Endothelial cell of umbilical vein (primary cell): ENCODE measurements at regions of chr3 and their contacts with region 1.

Region 1: GRCh38 chr3:64030741-64031140 is 7.4 kb upstream of the PSMD6 start:
- DNase-seq: peak; percentile 66
- H3K4me3 ChIP-seq: peak overlapping the region in 1 of 3 experiments; percentile 4
- H3K27ac ChIP-seq: no peak overlapping the region
- H3K4me1 ChIP-seq: no peaks in the 10 kb centered on the region
- H3K27me3 ChIP-seq: peaks cover 19 to 45% of the 10 kb centered on the region in 2 experiments
- CTCF ChIP-seq: peak; percentile 77 to 82
- POLR2A ChIP-seq: no peak

Region 2: DNA sequence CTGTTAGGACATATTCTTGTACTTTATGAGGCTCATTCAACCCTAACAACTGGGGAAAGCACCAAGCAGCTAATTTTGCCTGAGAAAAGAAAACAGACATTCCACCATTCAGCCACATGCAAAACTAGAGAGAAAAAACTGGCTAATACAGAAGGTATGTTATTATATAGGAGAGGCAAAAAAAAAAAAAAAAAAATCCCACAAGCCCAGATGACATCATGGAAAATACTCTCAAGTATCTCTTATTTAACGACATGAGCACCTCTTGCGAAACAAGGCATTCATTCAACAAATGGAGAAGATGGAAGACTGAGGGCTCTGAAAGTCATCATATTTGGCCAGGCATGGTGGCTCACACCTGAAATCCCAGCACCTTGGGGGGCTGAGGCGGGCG is 133.0 kb after region 1 on chr3:
- CTCF ChIA-PET with region 1: interaction called, 4 read pairs
- POLR2A ChIA-PET with region 1: no interaction called
- dilution Hi-C with region 1: no loop called
- intact Hi-C with region 1: loop called (anchors 1 kb)
- DNase-seq: no peak
- H3K4me3 ChIP-seq: no peak overlapping the region
- H3K27ac ChIP-seq: no peak overlapping the region
- H3K4me1 ChIP-seq: no peaks in the 10 kb centered on the region
- H3K27me3 ChIP-seq: no peaks in the 10 kb centered on the region
- CTCF ChIP-seq: no peak
- POLR2A ChIP-seq: no peak

Region 3: GRCh38 chr3:64382153-64382552 is 351.4 kb after region 1 on chr3:
- CTCF ChIA-PET with region 1: interaction called, 11 read pairs
- POLR2A ChIA-PET with region 1: no interaction called
- dilution Hi-C with region 1: no loop called
- intact Hi-C with region 1: no loop called
- DNase-seq: peak; percentile 11
- H3K4me3 ChIP-seq: no peak overlapping the region
- H3K27ac ChIP-seq: no peak overlapping the region
- H3K4me1 ChIP-seq: no peaks in the 10 kb centered on the region
- H3K27me3 ChIP-seq: no peaks in the 10 kb centered on the region
- CTCF ChIP-seq: no peak
- POLR2A ChIP-seq: no peak

Region 4: DNA sequence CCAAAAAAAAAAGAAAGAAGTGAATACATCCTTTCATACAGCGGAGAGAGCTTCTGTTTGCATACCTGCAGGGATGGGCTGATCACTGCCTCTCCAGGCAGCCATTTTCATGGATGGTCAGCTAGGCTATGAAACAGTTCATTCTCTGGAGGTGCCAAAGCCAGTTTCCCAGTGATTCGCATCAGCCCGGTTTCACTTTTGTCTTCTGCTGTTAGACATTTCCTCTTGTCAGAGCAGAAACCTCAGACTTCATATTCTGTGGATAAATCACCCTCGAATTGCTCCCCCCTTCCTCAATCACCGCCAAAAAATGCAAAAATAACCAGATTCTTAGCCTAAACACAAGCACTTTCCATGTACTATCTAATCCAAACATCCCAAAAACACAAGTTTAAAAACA is 431.5 kb after region 1 on chr3:
- CTCF ChIA-PET with region 1: interaction called, 27 read pairs
- POLR2A ChIA-PET with region 1: no interaction called
- dilution Hi-C with region 1: loop called (anchors 25 kb)
- intact Hi-C with region 1: loop called (anchors 1 kb)
- DNase-seq: no peak
- H3K4me3 ChIP-seq: no peak overlapping the region
- H3K27ac ChIP-seq: no peak overlapping the region
- H3K4me1 ChIP-seq: peaks cover 3% of the 10 kb centered on the region
- H3K27me3 ChIP-seq: peaks cover 7 to 9% of the 10 kb centered on the region in 2 experiments
- CTCF ChIP-seq: no peak
- POLR2A ChIP-seq: no peak

Region 5: DNA sequence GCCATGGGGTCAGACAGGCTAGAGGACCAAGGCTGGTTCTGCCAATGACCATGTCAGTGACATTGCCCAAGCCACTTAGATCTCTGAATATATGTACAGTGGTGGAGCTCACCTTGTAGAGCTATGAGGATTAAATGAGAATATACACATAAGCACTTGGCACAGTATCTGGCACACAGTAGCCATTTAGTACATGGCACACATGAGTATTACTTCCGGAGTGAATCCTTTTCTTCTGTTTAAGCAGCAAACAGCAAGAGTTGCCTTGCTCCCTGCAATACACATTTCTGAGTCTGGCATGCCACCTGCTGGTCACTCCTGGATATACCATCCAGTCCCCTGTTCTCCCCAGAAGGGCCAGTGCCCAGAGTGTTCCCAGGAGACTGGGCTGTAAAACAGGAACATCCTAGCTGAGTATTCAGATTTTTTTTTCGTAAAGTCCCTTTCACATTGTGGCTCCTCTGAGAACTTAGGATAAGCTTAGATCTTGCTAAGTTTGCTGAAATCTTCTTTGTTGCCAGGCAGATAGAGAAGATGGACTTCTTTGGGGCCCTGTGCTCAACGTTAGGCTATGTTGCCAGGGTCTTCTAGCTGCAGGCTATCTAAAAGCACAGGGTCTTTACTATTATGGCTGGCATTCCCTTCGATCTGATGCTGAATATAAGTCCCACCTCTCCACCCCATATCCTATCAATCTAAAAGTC is 453.7 kb after region 1 on chr3:
- CTCF ChIA-PET with region 1: interaction called, 62 read pairs
- POLR2A ChIA-PET with region 1: no interaction called
- dilution Hi-C with region 1: no loop called
- intact Hi-C with region 1: loop called (anchors 1 kb)
- DNase-seq: peak; percentile 81
- H3K4me3 ChIP-seq: no peak overlapping the region
- H3K27ac ChIP-seq: no peak overlapping the region
- H3K4me1 ChIP-seq: peaks cover 4% of the 10 kb centered on the region
- H3K27me3 ChIP-seq: peaks cover 8 to 13% of the 10 kb centered on the region in 2 experiments
- CTCF ChIP-seq: peak; percentile 78 to 81
- POLR2A ChIP-seq: no peak